Transverse colon (tissue), 4 donors: ENCODE measurements at regions of chr3 and their contacts with region 1.

Region 1: GRCh38 chr3:153161138-153161713 is 800 bp upstream of the RAP2B start:
- DNase-seq: peak; percentile 91
- H3K4me3 ChIP-seq: peak overlapping the region; percentile 58 to 96 (median 76)
- H3K27ac ChIP-seq: peak overlapping the region; percentile 91 to 98 (median 98)
- H3K4me1 ChIP-seq: peaks cover 6 to 32% (median 27%) of the 10 kb centered on the region in 4 donors
- H3K27me3 ChIP-seq: no peaks in the 10 kb centered on the region
- CTCF ChIP-seq: no peak
- EP300 ChIP-seq: no peak
- POLR2A ChIP-seq: peak; percentile 10

Region 2: GRCh38 chr3:153043729-153044328 is 117.4 kb before region 1 on chr3:
- in situ Hi-C with region 1: loop called in 1 of 4 experiments (anchors 10 kb)
- intact Hi-C with region 1: loop called (anchors 10 kb)
- DNase-seq: no peak
- H3K4me3 ChIP-seq: peak overlapping the region in 1 of 4 donors; percentile 42
- H3K27ac ChIP-seq: no peak overlapping the region
- H3K4me1 ChIP-seq: peaks cover 0 to 14% (median 2%) of the 10 kb centered on the region in 4 donors
- H3K27me3 ChIP-seq: no peaks in the 10 kb centered on the region
- CTCF ChIP-seq: no peak
- EP300 ChIP-seq: no peak
- POLR2A ChIP-seq: no peak